ENCODE measurements at regions of chr3 and their contacts with region 1.

Region 1: DNA sequence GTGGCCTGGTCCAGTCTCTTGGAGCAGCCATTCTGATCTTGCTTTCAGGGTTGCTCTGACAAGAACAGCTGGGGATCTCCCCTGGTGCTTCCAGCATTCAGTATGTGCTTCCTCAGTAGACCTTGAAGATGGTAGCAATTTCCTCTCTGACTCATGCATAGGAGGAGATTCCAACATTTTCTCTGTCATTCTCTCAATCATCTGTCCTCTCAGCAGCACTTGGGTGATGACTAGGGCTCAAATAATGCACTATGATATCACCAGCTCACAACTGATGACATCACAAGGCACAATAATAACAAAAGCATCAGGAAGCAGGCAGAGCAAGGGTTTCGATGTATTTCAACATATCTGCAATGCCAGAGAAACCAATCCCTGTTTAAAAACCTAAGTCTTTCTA is 52.7 kb downstream of the NFKBIZ start:
- DNase-seq: no peak
- ATAC-seq: peak; percentile 56
- H3K4me3 Mint-ChIP-seq: peak overlapping the region; percentile 36
- H3K27ac Mint-ChIP-seq: peak overlapping the region; percentile 91
- H3K4me1 Mint-ChIP-seq: peaks cover 61% of the 10 kb centered on the region
- H3K27me3 Mint-ChIP-seq: no peaks in the 10 kb centered on the region
- CTCF ChIP-seq: no peak

Region 2: DNA sequence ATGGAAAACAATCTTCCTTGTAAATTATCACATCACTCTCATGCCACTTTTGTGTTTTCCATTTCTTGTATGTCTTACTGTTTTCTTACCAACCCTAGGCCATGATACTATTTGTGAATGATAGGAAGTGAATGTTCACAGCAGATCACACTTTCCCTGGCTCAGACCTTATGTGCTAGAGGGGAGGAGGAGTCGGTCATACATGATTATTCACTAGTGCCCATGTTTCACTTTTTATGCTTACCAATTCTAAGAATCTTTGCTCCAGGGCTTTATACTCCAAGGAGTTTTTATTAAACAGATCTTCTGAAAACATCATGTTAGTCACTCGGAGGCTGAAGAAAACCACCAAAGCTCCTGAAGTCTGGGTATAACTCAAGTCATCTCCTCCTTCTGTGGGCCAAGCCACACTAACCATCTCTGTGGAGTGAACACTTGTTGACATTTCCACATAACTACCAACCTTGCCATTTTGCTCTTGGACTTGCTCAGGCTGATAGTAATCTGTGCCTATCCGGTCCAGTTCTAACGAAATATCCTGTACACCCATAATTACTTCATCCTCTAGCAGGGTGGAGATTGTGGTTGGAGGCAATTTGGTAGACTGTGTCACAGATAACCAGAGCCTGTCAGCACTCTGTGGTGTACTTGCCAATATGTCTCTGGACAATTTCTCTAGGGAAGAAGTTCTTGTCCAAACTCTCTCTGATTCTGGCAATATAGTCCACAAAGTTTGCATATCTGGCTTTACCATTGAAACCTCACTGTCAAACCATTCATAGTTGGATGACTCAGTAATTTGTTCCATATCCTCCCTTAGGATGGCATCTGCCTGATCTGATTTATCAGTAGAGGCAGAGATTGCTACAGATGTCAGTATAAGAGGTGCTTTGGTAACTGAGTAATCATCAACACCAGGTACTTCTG is 658.5 kb before region 1 on chr3:
- CTCF ChIA-PET with region 1: no interaction called
- POLR2A ChIA-PET with region 1: no interaction called
- intact Hi-C with region 1: no loop called
- DNase-seq: no peak
- ATAC-seq: no peak
- H3K4me3 Mint-ChIP-seq: no peak overlapping the region
- H3K27ac Mint-ChIP-seq: no peak overlapping the region
- H3K4me1 Mint-ChIP-seq: no peaks in the 10 kb centered on the region
- H3K27me3 Mint-ChIP-seq: no peaks in the 10 kb centered on the region
- CTCF ChIP-seq: no peak

Region 3: GRCh38 chr3:101478980-101479379 is 423.1 kb before region 1 on chr3:
- CTCF ChIA-PET with region 1: no interaction called
- POLR2A ChIA-PET with region 1: no interaction called
- intact Hi-C with region 1: no loop called
- DNase-seq: no peak
- ATAC-seq: no peak
- H3K4me3 Mint-ChIP-seq: no peak overlapping the region
- H3K27ac Mint-ChIP-seq: no peak overlapping the region
- H3K4me1 Mint-ChIP-seq: peaks cover 41% of the 10 kb centered on the region
- H3K27me3 Mint-ChIP-seq: no peaks in the 10 kb centered on the region
- CTCF ChIP-seq: no peak

Region 4: DNA sequence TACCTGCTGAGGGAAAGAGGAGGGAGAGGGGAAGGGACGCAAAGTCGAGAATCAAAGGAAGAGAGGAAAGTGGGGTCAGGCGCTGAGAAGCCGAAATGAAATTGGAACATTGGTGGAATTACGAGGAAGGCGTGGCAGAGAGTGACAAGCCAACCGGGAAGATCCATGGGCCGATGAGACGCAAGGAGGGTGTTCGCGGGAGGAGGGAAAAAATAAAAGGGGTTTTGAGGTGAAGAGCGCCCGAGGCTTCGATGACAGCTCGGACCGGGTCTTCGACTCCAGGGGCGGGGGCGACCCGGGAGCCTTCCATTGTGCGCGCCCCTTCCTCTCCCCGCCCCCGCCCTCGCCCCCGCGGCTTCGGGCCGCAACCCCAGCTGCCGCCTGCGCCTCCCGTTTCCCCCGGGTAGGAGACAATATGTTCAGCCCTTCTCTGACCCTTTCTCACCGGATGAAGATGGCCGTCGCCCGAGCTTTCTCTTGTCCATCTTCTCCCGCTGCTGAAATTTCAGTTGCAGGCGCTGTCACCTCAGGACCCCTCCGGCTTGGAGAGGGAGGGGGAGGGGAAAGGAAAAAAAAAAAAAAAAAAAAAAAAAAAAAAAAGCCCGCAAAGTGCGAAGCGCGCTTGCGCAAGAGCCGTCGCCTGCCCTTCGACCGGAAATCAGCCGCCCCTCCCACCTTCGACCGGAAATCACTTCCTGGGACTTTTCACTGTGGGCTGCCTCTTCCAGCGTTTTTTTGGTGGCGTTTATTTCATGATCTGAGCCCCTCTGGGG is 389.2 kb before region 1 on chr3 and contains the start of gene SENP7:
- CTCF ChIA-PET with region 1: no interaction called
- POLR2A ChIA-PET with region 1: interaction called, 10 read pairs
- intact Hi-C with region 1: no loop called
- DNase-seq: peak; percentile 74
- ATAC-seq: peak; percentile 72
- H3K4me3 Mint-ChIP-seq: peak within 1 kb of the TSS; percentile 98
- H3K27ac Mint-ChIP-seq: peak within 1 kb of the TSS; percentile 99
- H3K4me1 Mint-ChIP-seq: peaks cover 35% of the 10 kb centered on the region
- H3K27me3 Mint-ChIP-seq: no peaks in the 10 kb centered on the region
- CTCF ChIP-seq: no peak
- total RNA-seq, gene SENP7: 18.6 and 22.1 TPM in 2 replicates

Region 5: DNA sequence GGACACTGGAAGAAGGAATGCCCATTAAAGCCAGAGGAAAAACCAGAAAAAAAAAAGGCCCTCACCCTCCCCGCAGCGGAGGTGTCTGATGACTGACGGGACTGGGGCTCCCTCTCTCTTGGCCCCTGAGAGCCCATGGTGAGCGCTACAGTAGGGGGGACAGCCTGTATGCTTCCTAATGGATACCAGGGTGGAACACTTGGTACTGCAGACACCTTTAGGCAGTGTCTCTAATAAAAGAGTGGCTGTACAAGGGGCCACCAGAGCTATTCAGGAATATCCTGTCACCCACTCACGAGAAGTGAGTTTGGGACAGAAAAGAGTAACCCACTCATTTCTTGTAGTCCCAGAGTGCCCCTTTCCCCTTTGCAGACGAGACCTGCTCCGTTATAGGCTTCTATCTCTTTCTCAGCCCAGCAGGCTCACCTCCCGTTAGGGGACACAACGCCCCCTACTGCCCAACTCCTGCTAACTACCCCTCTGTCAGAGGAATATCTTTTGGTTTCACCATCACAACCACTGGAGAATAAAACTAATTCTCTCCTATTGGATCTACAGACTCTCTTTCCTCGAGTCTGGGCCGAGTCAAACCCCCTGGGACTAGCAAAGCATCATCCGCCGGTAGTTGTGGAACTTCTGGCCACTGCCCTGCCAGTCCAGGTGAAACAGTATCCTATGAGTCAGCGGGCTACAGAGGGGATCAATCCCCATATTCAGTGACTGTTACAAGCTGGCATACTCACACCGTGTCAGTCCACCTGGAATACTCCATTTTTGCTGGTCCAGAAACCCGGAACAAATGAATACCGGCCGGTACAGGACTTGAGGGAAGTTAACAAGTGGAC is 265.9 kb before region 1 on chr3:
- CTCF ChIA-PET with region 1: no interaction called
- POLR2A ChIA-PET with region 1: no interaction called
- intact Hi-C with region 1: no loop called
- DNase-seq: peak; percentile 27
- ATAC-seq: peak; percentile 76
- H3K4me3 Mint-ChIP-seq: no peak overlapping the region
- H3K27ac Mint-ChIP-seq: no peak overlapping the region
- H3K4me1 Mint-ChIP-seq: peaks cover 2% of the 10 kb centered on the region
- H3K27me3 Mint-ChIP-seq: no peaks in the 10 kb centered on the region
- CTCF ChIP-seq: no peak

Region 6: DNA sequence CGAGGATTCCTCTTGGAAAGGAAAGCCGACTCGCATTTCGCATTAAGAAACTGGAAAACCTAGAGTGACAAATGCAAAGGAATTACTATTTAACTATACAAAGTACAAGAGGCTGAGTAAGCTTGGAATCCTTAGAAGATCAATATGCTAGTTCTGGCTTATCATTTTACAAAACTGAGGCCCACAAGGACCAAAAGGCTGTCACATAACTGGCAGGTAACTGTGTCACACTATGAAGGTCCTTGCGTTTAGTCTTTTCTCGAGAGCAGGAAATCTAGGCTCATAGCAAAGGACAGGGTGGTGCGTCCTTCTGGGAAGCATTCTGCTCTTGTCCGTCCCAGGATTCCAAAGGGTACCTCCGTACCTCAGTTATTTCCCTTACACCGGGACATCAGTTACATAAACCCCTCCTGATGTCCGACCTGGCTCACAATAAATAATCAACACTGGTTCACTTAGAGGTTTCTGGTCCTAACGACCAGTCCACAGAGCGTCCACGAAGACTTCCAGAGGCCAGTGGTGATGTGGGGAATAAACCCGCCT is 216.1 kb before region 1 on chr3:
- CTCF ChIA-PET with region 1: no interaction called
- POLR2A ChIA-PET with region 1: no interaction called
- intact Hi-C with region 1: no loop called
- DNase-seq: no peak
- ATAC-seq: peak; percentile 6
- H3K4me3 Mint-ChIP-seq: peak overlapping the region; percentile 100
- H3K27ac Mint-ChIP-seq: peak overlapping the region; percentile 99
- H3K4me1 Mint-ChIP-seq: peaks cover 40% of the 10 kb centered on the region
- H3K27me3 Mint-ChIP-seq: no peaks in the 10 kb centered on the region
- CTCF ChIP-seq: no peak

Region 7: GRCh38 chr3:101819758-101820157 is 82.3 kb before region 1 on chr3:
- CTCF ChIA-PET with region 1: no interaction called
- POLR2A ChIA-PET with region 1: no interaction called
- intact Hi-C with region 1: loop called (anchors 2 kb)
- DNase-seq: no peak
- ATAC-seq: peak; percentile 83
- H3K4me3 Mint-ChIP-seq: no peak overlapping the region
- H3K27ac Mint-ChIP-seq: peak overlapping the region; percentile 81
- H3K4me1 Mint-ChIP-seq: peaks cover 64% of the 10 kb centered on the region
- H3K27me3 Mint-ChIP-seq: no peaks in the 10 kb centered on the region
- CTCF ChIP-seq: no peak

Region 8: GRCh38 chr3:101861212-101861788 is 40.7 kb before region 1 on chr3:
- CTCF ChIA-PET with region 1: no interaction called
- POLR2A ChIA-PET with region 1: interaction called, 5 read pairs
- intact Hi-C with region 1: loop called (anchors 5 kb)
- DNase-seq: no peak
- ATAC-seq: peak; percentile 64
- H3K4me3 Mint-ChIP-seq: peak overlapping the region; percentile 51
- H3K27ac Mint-ChIP-seq: peak overlapping the region; percentile 75
- H3K4me1 Mint-ChIP-seq: peaks cover 76% of the 10 kb centered on the region
- H3K27me3 Mint-ChIP-seq: no peaks in the 10 kb centered on the region
- CTCF ChIP-seq: no peak

Region 9: GRCh38 chr3:101913173-101913572 is 11.1 kb after region 1 on chr3:
- CTCF ChIA-PET with region 1: no interaction called
- POLR2A ChIA-PET with region 1: interaction called, 8 read pairs
- intact Hi-C with region 1: loop called (anchors 1 kb)
- DNase-seq: no peak
- ATAC-seq: peak; percentile 21
- H3K4me3 Mint-ChIP-seq: no peak overlapping the region
- H3K27ac Mint-ChIP-seq: no peak overlapping the region
- H3K4me1 Mint-ChIP-seq: peaks cover 15% of the 10 kb centered on the region
- H3K27me3 Mint-ChIP-seq: no peaks in the 10 kb centered on the region
- CTCF ChIP-seq: no peak

Region 10: DNA sequence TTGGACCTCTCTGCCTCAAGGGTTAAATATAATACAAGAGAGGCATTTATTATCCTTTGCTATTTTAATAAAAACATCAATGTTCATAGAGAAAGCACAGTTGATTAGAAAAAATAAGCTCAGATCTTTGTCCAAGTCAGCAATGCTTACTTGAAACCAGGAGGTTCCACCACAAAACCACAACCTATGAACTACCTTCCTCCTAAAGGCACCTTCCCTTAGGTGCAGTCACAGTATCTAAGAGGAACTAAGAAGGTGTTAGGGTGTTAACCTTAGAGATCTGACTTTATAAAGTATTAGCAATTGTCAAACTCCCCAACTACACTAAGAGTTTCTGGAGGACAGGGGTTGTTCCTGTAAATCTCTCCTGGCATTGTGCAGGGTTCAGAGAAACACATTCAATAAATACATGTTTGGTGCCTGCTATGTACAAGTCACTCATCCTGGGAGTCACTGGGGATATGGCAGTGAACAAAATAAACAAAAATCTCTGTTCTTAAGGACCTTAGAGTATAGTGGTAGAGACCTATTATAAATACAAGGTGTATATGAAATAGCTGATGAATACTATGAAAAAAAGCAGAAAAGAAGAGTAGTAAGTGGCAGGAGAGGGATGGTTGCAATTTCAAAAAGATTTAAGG is 155.9 kb after region 1 on chr3:
- CTCF ChIA-PET with region 1: no interaction called
- POLR2A ChIA-PET with region 1: interaction called, 3 read pairs
- intact Hi-C with region 1: loop called (anchors 1 kb)
- DNase-seq: no peak
- ATAC-seq: peak; percentile 75
- H3K4me3 Mint-ChIP-seq: peak overlapping the region; percentile 42
- H3K27ac Mint-ChIP-seq: peak overlapping the region; percentile 97
- H3K4me1 Mint-ChIP-seq: peaks cover 61% of the 10 kb centered on the region
- H3K27me3 Mint-ChIP-seq: no peaks in the 10 kb centered on the region
- CTCF ChIP-seq: no peak

Measured in activated B cell treated with CpG ODN at 0.5 μM for 24 hours (primary cell).